ENCODE measurements at regions of chr9 and their contacts with region 1.

Region 1: GRCh38 chr9:9598723-9599122 is 1014.1 kb downstream of the PTPRD start:
- DNase-seq: no peak
- H3K4me3 ChIP-seq: no peak overlapping the region
- H3K27ac ChIP-seq: no peak overlapping the region
- H3K4me1 ChIP-seq: no peaks in the 10 kb centered on the region
- H3K27me3 ChIP-seq: no peaks in the 10 kb centered on the region
- CTCF ChIP-seq: no peak

Region 2: DNA sequence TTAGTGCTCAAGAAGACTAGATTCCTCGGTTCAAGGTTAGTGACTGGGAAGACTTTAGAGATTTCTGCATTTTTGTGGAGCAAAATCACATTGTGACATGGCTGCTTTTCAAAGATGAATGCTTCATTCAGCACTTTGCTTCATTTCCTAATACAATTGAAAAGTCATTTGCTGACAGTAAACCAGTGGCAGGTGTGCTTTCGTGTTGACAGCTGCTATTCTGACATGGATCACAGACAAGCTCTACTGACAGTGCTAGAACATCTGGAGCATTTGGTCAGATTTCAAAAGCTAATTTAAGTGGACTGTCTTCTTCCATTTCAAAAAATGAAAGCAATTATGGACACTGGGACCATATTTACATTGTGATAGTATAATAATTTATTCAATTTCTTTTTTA is 46.1 kb before region 1 on chr9:
- CTCF ChIA-PET with region 1: no interaction called
- POLR2A ChIA-PET with region 1: interaction called, 11 read pairs
- intact Hi-C with region 1: no loop called
- DNase-seq: no peak
- H3K4me3 ChIP-seq: no peak overlapping the region
- H3K27ac ChIP-seq: no peak overlapping the region
- H3K4me1 ChIP-seq: no peaks in the 10 kb centered on the region
- H3K27me3 ChIP-seq: no peaks in the 10 kb centered on the region
- CTCF ChIP-seq: no peak

Region 3: GRCh38 chr9:10112798-10113197 is 514.1 kb after region 1 on chr9:
- CTCF ChIA-PET with region 1: interaction called, 10 read pairs
- POLR2A ChIA-PET with region 1: no interaction called
- intact Hi-C with region 1: no loop called
- DNase-seq: no peak
- H3K4me3 ChIP-seq: no peak overlapping the region
- H3K27ac ChIP-seq: no peak overlapping the region
- H3K4me1 ChIP-seq: no peaks in the 10 kb centered on the region
- H3K27me3 ChIP-seq: no peaks in the 10 kb centered on the region
- CTCF ChIP-seq: no peak